PC-9 (cell line): ENCODE measurements at regions of chr3 and their contacts with region 1.

Region 1: GRCh38 chr3:126134219-126134975 is 46.0 kb downstream of the ALDH1L1 start:
- DNase-seq: peak in 1 of 2 experiments; percentile 56
- H3K4me3 ChIP-seq: no peak overlapping the region
- H3K27ac ChIP-seq: no peak overlapping the region
- H3K4me1 ChIP-seq: peaks cover 15% of the 10 kb centered on the region
- H3K27me3 ChIP-seq: no peaks in the 10 kb centered on the region
- CTCF ChIP-seq: peak; percentile 85

Region 2: GRCh38 chr3:126180477-126181397 is 46.3 kb after region 1 on chr3 and contains the start of gene ALDH1L1:
- CTCF ChIA-PET with region 1: no interaction called
- POLR2A ChIA-PET with region 1: no interaction called
- intact Hi-C with region 1: loop called (anchors 2 kb)
- DNase-seq: peak; percentile 72 to 90
- H3K4me3 ChIP-seq: peak within 1 kb of the TSS; percentile 65
- H3K27ac ChIP-seq: peak within 1 kb of the TSS; percentile 69
- H3K4me1 ChIP-seq: peaks cover 14% of the 10 kb centered on the region; the same call in 1 of the 2 replicates
- H3K27me3 ChIP-seq: no peaks in the 10 kb centered on the region
- CTCF ChIP-seq: no peak
- total RNA-seq, gene ALDH1L1: 46.9 and 50.0 TPM in 2 replicates